ENCODE measurements at regions of chr7 and their contacts with region 1.

Region 1: GRCh38 chr7:47991741-47992311 is 12.4 kb upstream of the HUS1 start:
- DNase-seq: peak; percentile 96
- ATAC-seq: peak; percentile 99

Region 2: DNA sequence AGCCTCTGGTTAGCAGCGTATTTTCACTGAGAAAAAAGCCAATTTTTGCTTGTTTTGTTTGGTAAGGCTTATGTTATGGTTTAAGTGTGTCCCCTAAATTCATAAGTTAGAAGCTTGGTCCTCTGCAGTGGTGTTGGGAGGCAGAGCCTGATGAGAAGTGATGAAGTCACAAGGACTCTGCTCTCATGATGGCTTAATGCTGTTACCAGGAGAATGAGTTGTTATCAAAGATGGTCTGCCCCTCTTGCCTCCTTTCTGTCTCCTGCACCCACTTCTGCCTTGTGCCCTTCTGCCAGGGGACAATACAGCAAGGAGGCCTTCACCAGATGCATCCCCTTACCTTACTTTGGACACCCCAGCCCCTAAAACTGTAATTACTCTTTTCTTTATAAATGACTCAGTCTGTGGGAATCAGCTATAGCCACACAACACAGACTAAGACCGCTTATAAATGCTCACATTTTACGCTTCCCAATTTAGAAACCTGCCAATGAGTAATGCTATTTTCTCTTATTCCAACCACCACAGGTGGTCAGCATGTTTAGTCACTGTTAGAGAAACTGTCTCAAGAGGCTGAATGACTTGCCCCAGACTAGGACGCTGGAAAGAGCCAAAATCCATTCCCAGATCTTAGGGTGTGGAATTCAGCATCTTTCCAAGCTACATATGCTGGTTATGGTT is 37.5 kb before region 1 on chr7:
- intact Hi-C with region 1: no loop called
- DNase-seq: no peak
- ATAC-seq: no peak

Region 3: GRCh38 chr7:48035301-48035966 is 43.6 kb after region 1 on chr7 and contains the start of gene C7orf57:
- intact Hi-C with region 1: loop called (anchors 5 kb)
- DNase-seq: peak; percentile 97
- ATAC-seq: peak; percentile 99
- total RNA-seq, gene C7orf57: not detected

Region 4: DNA sequence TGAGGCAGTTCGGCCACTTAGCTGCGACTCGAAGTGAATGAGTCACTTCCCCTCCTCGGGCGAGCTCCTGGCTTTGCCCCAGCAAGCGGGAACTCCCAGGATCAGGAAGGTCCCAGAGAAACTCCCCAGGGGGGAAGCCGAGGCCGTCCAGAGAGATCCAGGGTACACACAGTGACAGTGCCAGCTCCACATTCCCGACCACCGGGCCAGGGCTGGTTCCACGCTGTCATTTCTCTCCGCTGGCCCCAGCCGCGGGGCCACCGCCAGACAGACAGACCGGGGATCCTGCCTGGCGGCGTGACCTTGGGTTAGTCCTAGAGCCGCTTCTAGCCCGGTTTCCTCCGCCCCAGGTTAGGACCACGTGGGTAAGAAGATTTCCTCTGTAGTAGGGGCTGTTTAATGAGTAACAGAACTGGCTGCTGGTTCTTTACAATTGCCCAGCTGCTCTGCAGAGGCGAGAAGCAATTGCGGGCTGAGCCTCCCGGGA is 96.8 kb after region 1 on chr7:
- intact Hi-C with region 1: loop called (anchors 5 kb)
- DNase-seq: peak; percentile 92
- ATAC-seq: peak; percentile 65

Region 5: DNA sequence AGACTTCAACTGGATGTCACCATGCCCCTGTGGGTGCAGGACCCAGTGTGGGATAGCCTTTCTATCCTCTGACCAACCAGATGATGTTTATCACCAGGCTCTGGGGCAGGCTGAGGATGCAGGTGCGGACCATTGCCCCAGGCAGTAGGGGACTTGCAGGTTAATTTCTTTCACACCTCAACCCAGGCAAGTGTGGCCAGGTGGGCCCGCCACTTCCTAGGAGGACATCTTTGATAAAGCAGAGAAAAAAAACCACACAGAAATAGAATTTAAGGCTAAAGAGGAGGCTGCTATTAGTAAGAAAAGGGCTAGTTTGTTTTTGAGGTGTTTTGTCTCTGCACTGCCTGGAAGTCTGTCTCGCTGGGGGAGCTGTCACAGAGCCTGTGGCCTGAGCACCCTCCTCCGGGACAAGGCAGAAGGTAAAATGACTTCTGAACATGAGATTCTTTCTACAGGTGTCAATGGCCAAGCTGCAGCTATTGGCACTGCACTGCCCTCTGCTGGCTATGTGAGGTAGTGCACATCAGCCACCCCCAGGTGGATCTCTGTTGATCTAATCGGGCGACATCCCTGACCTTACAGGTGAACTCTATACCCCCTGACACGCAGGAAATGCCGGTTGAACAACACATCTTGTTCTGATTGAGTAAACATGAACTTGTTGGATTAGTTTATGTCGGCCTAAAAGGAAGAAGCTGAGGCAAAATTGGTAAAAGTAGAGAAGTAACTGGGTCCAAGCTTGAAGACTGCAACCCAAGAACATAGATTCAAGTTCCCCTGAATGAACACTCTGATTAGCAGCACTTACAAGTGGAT is 118.2 kb after region 1 on chr7:
- intact Hi-C with region 1: loop called (anchors 1 kb)
- DNase-seq: peak; percentile 83
- ATAC-seq: peak; percentile 58